CD14-positive monocyte (primary cell): ENCODE measurements at regions of chr14 and their contacts with region 1.

Region 1: GRCh38 chr14:104976198-104977007 is 1.8 kb downstream of the AHNAK2 start:
- DNase-seq: peak; percentile 78 to 80 (median 80)
- H3K4me3 ChIP-seq: no peak overlapping the region
- H3K4me3 Mint-ChIP-seq: peak overlapping the region in 1 of 2 donors; percentile 79
- H3K27ac ChIP-seq: no peak overlapping the region
- H3K27ac Mint-ChIP-seq: peak overlapping the region in 2 of 7 donors; percentile 45 to 79
- H3K4me1 ChIP-seq: peaks cover 5 to 24% of the 10 kb centered on the region in 2 donors
- H3K4me1 Mint-ChIP-seq: peaks cover 17% of the 10 kb centered on the region
- H3K27me3 ChIP-seq: peaks cover 10 to 34% of the 10 kb centered on the region in 2 donors
- H3K27me3 Mint-ChIP-seq: peaks cover 38 to 43% (median 42%) of the 10 kb centered on the region in 3 donors
- CTCF ChIP-seq: peak; percentile 90

Region 2: DNA sequence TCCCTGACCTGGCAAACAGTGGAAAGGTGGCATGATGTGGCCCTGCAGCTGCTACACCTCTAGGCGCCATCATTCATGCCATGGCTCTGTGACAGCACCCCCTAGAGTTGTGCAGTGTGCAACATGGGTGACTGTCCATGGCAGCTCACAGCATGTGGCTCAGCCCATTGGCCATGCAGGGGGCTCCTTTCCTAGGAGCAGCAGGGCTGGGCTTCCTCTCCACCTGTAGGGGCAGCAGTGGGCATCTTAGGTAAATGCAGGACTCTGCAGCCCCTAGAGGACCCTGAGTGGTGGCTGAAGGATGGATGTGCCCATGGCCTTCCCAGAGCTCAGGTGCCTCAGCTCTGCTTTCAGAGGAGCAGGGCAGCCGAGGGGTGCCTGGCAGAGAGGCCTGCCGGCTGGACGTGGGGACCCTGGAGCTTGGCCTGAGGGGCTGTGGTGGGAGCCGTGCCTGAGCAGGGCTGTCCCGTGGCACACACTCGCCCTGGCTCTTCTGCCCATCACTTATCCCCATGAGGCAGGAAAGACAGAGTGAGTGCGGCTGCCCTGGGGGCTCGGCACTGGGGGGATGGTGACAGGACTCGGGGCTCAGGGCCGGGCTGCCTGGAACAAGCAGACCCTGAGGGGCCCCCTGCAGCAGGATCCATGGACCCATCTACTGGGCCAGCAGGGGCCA is 245.0 kb before region 1 on chr14:
- intact Hi-C with region 1: no loop called
- DNase-seq: no peak
- H3K4me3 ChIP-seq: no peak overlapping the region
- H3K4me3 Mint-ChIP-seq: no peak overlapping the region
- H3K27ac ChIP-seq: no peak overlapping the region
- H3K27ac Mint-ChIP-seq: no peak overlapping the region
- H3K4me1 ChIP-seq: peaks cover 10% of the 10 kb centered on the region in 2 donors
- H3K4me1 Mint-ChIP-seq: peaks cover 9% of the 10 kb centered on the region
- H3K27me3 ChIP-seq: no peaks in the 10 kb centered on the region
- H3K27me3 Mint-ChIP-seq: peaks cover 0 to 9% (median 5%) of the 10 kb centered on the region in 3 donors
- CTCF ChIP-seq: no peak

Region 3: GRCh38 chr14:104940526-104941150 is 35.8 kb before region 1 on chr14:
- intact Hi-C with region 1: no loop called
- DNase-seq: no peak
- H3K4me3 ChIP-seq: no peak overlapping the region
- H3K4me3 Mint-ChIP-seq: no peak overlapping the region
- H3K27ac ChIP-seq: no peak overlapping the region
- H3K27ac Mint-ChIP-seq: no peak overlapping the region
- H3K4me1 ChIP-seq: no peaks in the 10 kb centered on the region
- H3K4me1 Mint-ChIP-seq: no peaks in the 10 kb centered on the region
- H3K27me3 ChIP-seq: peaks cover 0 to 21% of the 10 kb centered on the region in 2 donors
- H3K27me3 Mint-ChIP-seq: peaks cover 23 to 36% (median 29%) of the 10 kb centered on the region in 3 donors
- CTCF ChIP-seq: no peak

Region 4: GRCh38 chr14:105045710-105046326 is 69.4 kb after region 1 on chr14:
- intact Hi-C with region 1: loop called (anchors 1 kb)
- DNase-seq: peak; percentile 90 to 94 (median 91)
- H3K4me3 ChIP-seq: peak overlapping the region in 1 of 3 experiments; percentile 14
- H3K4me3 Mint-ChIP-seq: peak overlapping the region in 1 of 2 donors; percentile 51
- H3K27ac ChIP-seq: peak overlapping the region; percentile 21 to 38
- H3K27ac Mint-ChIP-seq: peak overlapping the region in 5 of 7 donors; percentile 19 to 77 (median 25)
- H3K4me1 ChIP-seq: peaks cover 32 to 38% of the 10 kb centered on the region in 2 donors
- H3K4me1 Mint-ChIP-seq: peaks cover 24% of the 10 kb centered on the region
- H3K27me3 ChIP-seq: no peaks in the 10 kb centered on the region
- H3K27me3 Mint-ChIP-seq: peaks cover 0 to 6% (median 2%) of the 10 kb centered on the region in 3 donors
- CTCF ChIP-seq: peak; percentile 100

Region 5: DNA sequence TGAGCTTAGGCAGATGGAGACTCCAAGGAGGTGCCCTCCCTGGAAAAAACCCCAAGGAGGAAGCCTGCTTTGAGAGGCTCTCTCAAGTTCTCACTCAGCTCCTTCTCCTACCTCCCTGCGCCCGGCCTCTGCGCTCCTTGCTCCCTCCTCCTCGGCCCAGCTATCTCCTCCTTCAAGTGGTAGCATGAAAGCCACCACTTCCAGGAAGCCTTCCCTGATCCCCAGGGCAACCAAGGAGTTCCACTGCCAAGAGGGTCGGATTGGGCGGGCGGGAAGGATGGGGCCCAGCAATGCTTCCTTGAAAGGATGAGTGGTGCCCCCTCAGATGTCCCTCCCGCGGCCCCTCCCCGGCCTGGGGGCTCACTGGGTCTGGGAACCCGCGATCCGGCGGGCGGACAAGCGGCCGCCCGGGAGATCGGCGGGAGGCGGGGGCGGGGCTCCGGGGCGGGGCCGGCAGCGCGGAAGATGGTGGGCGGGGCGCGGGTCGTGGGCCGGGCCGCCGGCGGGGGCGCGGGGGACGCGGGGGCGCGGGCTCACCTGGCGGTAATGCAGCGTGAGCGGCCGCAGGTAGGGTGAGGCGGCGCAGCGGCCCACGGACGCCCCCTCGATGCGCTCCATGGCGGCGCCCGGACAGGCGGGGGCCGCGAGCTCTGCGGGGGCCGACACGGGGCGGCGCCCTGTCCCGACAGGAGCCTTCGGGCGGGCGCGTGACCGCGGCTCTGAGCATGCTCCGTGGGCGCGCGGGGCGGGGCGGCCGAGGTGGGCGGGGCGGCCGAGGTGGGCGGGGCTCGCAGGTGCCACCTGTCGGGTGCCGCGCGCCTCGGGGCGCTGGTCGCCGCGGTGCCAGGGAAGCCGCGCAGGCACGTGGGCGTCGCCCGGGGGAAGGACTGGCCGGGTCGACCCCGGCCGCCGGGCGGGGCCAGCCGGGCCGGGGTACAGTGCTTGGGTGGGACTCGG is 204.5 kb after region 1 on chr14 and contains the start of gene NUDT14:
- intact Hi-C with region 1: loop called in 1 of 2 experiments (anchors 5 kb)
- DNase-seq: peak in 2 of 3 donors; percentile 14 to 55
- H3K4me3 ChIP-seq: peak within 1 kb of the TSS; percentile 49 to 81 (median 51)
- H3K4me3 Mint-ChIP-seq: peak within 1 kb of the TSS; percentile 85 to 91
- H3K27ac ChIP-seq: no peak within 1 kb of the TSS
- H3K27ac Mint-ChIP-seq: peak within 1 kb of the TSS in 4 of 7 donors; percentile 37 to 80 (median 60)
- H3K4me1 ChIP-seq: peaks cover 22 to 27% of the 10 kb centered on the region in 2 donors
- H3K4me1 Mint-ChIP-seq: peaks cover 24% of the 10 kb centered on the region
- H3K27me3 ChIP-seq: peaks cover 0 to 13% of the 10 kb centered on the region in 2 donors
- H3K27me3 Mint-ChIP-seq: peaks cover 27 to 58% (median 29%) of the 10 kb centered on the region in 3 donors
- CTCF ChIP-seq: no peak
- polyA plus RNA-seq, gene NUDT14: 22.0 to 37.4 (median 23.9) TPM